ENCODE measurements at regions of chr15 and their contacts with region 1.

Region 1: GRCh38 chr15:32659340-32660155 is 18.0 kb downstream of the SCG5 start:
- DNase-seq: no peak
- H3K4me3 ChIP-seq: no peak overlapping the region
- H3K27ac ChIP-seq: peak overlapping the region in 1 of 4 donors; percentile 14
- H3K4me1 ChIP-seq: no peaks in the 10 kb centered on the region
- H3K27me3 ChIP-seq: no peaks in the 10 kb centered on the region
- CTCF ChIP-seq: no peak
- EP300 ChIP-seq: no peak
- POLR2A ChIP-seq: no peak

Region 2: DNA sequence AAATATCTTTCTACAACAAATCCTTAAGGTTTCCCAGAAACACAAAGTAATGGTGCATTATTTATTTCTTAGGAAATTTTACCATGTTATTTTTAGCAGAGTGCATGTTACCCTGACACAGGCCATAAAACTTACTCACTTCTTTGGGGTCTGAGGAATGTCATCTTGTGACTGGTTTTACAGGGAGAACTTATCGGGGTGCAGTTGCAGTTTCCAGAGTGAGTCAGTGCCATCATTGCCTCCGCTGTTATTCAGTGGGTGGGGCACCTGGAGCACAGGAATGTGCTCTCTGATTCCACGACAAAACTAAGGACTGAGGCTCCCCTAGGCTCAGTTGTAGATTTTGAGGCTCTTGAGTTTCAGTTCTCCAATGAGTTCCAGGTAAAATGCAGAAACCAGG is 47.2 kb after region 1 on chr15:
- in situ Hi-C with region 1: no loop called
- intact Hi-C with region 1: no loop called
- DNase-seq: no peak
- H3K4me3 ChIP-seq: no peak overlapping the region
- H3K27ac ChIP-seq: peak overlapping the region in 1 of 4 donors; percentile 6
- H3K4me1 ChIP-seq: no peaks in the 10 kb centered on the region
- H3K27me3 ChIP-seq: no peaks in the 10 kb centered on the region
- CTCF ChIP-seq: no peak
- EP300 ChIP-seq: no peak
- POLR2A ChIP-seq: no peak

Region 3: DNA sequence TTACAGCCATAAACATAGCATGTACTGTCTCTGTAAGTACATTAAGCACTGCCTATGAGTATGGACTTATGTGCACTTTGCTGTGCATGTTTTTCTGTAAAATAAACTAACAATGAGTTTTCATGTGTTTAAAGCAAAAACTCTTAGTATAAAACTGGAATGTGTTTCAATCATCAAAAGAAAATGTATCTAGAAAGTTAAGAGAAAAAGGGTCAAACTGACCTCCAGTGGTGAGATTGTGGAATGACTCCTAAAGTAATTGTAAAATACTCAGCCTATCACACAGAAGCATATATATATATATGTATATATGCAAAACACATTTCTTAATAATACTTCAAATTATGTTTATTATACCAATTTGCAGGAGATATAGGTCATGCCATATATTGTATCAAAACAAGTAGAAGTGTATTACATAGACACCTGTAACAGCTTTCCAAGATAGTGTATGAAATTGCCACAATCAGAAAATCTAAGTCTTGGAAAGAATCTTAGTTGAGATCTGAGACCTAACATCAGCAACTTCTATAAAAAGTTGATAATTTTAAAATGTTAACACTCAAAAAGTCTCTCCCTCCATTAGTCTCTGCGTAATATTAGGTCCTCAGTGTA is 335.4 kb after region 1 on chr15:
- in situ Hi-C with region 1: loop called (anchors 5 to 25 kb)
- intact Hi-C with region 1: loop called (anchors 5 kb)
- DNase-seq: no peak
- H3K4me3 ChIP-seq: no peak overlapping the region
- H3K27ac ChIP-seq: no peak overlapping the region
- H3K4me1 ChIP-seq: no peaks in the 10 kb centered on the region
- H3K27me3 ChIP-seq: no peaks in the 10 kb centered on the region
- CTCF ChIP-seq: peak; percentile 47 to 60 (median 51)
- EP300 ChIP-seq: no peak
- POLR2A ChIP-seq: no peak

Measured in transverse colon (tissue), 4 donors.